HCT116 (cell line): ENCODE measurements at regions of chr15 and their contacts with region 1.

Region 1: DNA sequence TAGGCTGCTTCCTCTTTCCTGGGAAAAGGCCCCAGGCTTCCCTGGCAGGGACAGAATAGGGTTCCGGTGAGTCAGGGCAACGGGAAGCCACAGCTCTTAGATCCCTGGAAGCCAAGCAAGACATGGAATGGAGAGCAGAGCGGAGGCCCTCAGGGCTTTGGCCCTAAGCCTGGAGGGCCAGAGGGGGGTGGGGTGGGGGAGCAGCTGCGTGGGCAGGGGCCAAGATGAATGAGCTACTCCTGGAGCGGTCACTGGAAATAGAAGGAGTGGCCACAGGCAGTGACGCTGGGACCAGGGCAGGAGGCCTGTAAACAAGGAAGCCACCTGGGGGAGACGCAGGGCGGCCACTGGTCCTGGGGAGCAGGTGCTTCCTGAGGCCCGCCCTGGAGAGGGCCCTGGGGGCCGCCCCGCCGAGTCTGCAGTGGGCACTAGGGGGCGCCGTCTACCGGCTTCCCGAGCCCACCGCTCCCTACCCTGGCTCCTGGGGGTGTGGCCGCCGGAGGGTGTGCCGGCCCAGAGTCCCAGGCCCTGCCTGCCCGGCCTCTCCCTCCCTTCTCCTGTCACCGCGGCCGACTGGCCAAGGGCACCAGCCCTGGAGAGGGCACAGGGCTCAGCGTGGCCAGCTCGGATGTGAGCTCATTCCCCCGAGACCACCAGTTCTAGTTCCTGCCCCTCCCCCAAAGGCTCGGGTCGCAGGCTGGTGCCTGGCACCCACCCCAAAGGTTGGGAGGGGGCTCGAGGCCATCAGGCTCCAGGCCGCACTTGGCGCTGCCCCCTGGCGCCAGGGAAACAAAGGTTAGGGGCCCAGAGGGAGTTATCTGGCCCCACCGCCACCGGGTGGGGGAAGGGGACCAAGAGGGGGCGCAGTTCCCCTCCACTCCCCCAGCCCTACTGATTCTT is 12.1 kb downstream of the VPS18 start:
- DNase-seq: peak; percentile 90
- ATAC-seq: peak; percentile 90
- H3K4me3 ChIP-seq: peak overlapping the region; percentile 41 to 64
- H3K27ac ChIP-seq: peak overlapping the region; percentile 94
- H3K4me1 ChIP-seq: peaks cover 32 to 40% of the 10 kb centered on the region in 2 experiments
- H3K27me3 ChIP-seq: no peaks in the 10 kb centered on the region
- CTCF ChIP-seq: peak in 2 of 3 experiments; percentile 76 to 83; a peak in 4 of 6 replicates
- POLR2A ChIP-seq: no peak
- RAD21 ChIP-seq: no peak

Region 2: GRCh38 chr15:40613080-40613479 is 293.3 kb before region 1 on chr15:
- CTCF ChIA-PET with region 1: no interaction called
- POLR2A ChIA-PET with region 1: no interaction called
- RAD21 ChIA-PET with region 1: no interaction called
- intact Hi-C with region 1: no loop called
- DNase-seq: no peak
- ATAC-seq: no peak
- H3K4me3 ChIP-seq: no peak overlapping the region
- H3K27ac ChIP-seq: no peak overlapping the region
- H3K4me1 ChIP-seq: no peaks in the 10 kb centered on the region
- H3K27me3 ChIP-seq: no peaks in the 10 kb centered on the region
- CTCF ChIP-seq: no peak
- POLR2A ChIP-seq: no peak
- RAD21 ChIP-seq: no peak

Region 3: GRCh38 chr15:40893733-40894688 is 12.3 kb before region 1 on chr15 and contains the start of gene VPS18:
- CTCF ChIA-PET with region 1: interaction called, 32 read pairs
- POLR2A ChIA-PET with region 1: interaction called, 3 read pairs
- RAD21 ChIA-PET with region 1: interaction called in 1 of 2 experiments, 12 read pairs
- intact Hi-C with region 1: no loop called
- DNase-seq: peak; percentile 94
- ATAC-seq: peak; percentile 93
- H3K4me3 ChIP-seq: peak within 1 kb of the TSS; percentile 94
- H3K27ac ChIP-seq: peak within 1 kb of the TSS; percentile 73
- H3K4me1 ChIP-seq: peaks cover 7 to 26% of the 10 kb centered on the region in 2 experiments; a peak in 3 of 4 replicates
- H3K27me3 ChIP-seq: no peaks in the 10 kb centered on the region
- CTCF ChIP-seq: peak; percentile 70 to 89 (median 81)
- POLR2A ChIP-seq: peak; percentile 67
- RAD21 ChIP-seq: peak; percentile 97
- total RNA-seq, gene VPS18: 16.9 TPM

Region 4: DNA sequence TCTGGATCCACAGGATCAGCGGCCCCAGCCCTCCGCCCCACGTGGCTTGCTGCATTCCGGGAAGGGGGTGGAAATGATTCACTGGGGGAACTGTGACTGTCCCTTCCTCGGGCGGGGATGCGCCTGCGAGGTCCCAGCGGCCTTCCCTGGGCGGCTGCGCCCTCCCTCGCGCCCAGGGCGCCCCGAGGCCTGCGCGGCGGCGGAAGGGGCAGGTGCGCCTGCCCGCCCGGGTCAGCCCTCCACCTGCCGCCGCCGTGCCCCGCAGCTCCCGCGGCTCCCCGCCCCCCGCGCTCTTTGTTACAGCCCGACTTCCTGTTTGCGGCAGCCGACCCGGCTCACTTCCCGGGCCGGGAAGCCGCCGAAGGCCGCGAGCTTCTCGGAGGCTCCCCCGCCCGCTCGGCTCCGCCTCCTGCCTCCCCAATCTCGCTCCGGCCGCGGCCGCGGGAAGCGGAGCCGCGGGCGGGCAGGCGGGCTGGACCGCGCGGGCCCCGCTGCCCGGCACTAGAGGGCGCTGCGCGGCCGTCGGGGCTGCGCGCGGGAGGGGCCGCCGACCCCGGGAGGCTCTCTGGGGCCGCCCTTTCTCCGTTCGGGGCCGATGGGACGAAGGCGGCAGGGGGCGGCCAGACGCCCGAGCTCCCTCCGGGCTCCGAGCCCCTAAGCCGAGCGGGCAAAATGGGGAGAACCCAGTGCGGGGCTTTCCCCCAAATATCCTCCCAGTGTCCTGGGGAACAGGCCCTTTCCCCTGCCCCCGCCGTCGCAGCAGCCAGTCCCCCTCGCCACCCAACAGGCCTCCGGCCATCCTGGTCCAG is 35.4 kb after region 1 on chr15:
- CTCF ChIA-PET with region 1: interaction called, 10 read pairs
- POLR2A ChIA-PET with region 1: interaction called, 3 read pairs
- RAD21 ChIA-PET with region 1: interaction called in 1 of 2 experiments, 4 read pairs
- intact Hi-C with region 1: no loop called
- DNase-seq: no peak
- ATAC-seq: peak; percentile 87
- H3K4me3 ChIP-seq: peak overlapping the region; percentile 53 to 60
- H3K27ac ChIP-seq: peak overlapping the region; percentile 72
- H3K4me1 ChIP-seq: peaks cover 17 to 18% of the 10 kb centered on the region in 2 experiments; a peak in 3 of 4 replicates
- H3K27me3 ChIP-seq: no peaks in the 10 kb centered on the region
- CTCF ChIP-seq: peak; percentile 20 to 33 (median 32); a peak in 3 of 6 replicates
- POLR2A ChIP-seq: peak; percentile 55
- RAD21 ChIP-seq: peak; percentile 53

Region 5: GRCh38 chr15:41022487-41023090 is 116.2 kb after region 1 on chr15:
- CTCF ChIA-PET with region 1: interaction called, 4 read pairs
- POLR2A ChIA-PET with region 1: interaction called, 3 read pairs
- RAD21 ChIA-PET with region 1: interaction called in 1 of 2 experiments, 3 read pairs
- intact Hi-C with region 1: loop called (anchors 1 kb)
- DNase-seq: peak; percentile 28
- ATAC-seq: peak; percentile 90
- H3K4me3 ChIP-seq: no peak overlapping the region
- H3K27ac ChIP-seq: no peak overlapping the region
- H3K4me1 ChIP-seq: no peaks in the 10 kb centered on the region
- H3K27me3 ChIP-seq: no peaks in the 10 kb centered on the region
- CTCF ChIP-seq: peak; percentile 68 to 74 (median 73)
- POLR2A ChIP-seq: no peak
- RAD21 ChIP-seq: peak; percentile 76

Region 6: DNA sequence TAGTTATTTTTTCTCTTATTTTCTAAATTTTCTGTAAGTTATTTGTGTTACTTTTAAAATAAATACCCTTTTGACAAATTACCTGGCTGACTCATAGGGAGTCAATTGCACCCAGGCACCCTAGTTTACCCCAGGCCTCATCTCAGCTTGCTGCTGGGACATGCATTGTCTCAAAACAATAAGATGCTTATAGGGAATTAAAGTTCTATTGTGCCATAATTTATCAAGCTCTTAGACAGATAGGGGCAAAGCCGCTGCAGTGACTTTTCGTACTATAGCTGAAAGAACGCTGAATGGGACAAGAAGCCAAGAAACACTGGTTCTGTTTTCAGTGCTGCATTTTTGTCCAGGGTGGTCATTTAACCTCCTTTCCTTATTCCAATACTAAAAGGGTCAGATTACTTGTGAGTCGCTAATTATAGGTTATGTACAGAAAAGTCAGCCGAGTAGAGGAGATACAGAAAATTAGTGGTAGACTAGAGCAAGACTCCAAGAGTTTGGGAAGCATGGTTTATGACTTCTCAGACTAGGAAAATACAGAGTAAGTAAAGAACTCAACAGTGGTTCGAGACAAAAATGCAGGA is 274.0 kb after region 1 on chr15:
- CTCF ChIA-PET with region 1: interaction called, 78 read pairs
- POLR2A ChIA-PET with region 1: interaction called, 5 read pairs
- RAD21 ChIA-PET with region 1: interaction called, 3 to 9 read pairs
- intact Hi-C with region 1: loop called (anchors 1 kb)
- DNase-seq: no peak
- ATAC-seq: no peak
- H3K4me3 ChIP-seq: no peak overlapping the region
- H3K27ac ChIP-seq: no peak overlapping the region
- H3K4me1 ChIP-seq: peaks cover 2 to 8% of the 10 kb centered on the region in 2 experiments; a peak in 1 of 4 replicates
- H3K27me3 ChIP-seq: no peaks in the 10 kb centered on the region
- CTCF ChIP-seq: no peak
- POLR2A ChIP-seq: no peak
- RAD21 ChIP-seq: no peak